ENCODE measurements at regions of chr3 and their contacts with region 1.

Region 1: DNA sequence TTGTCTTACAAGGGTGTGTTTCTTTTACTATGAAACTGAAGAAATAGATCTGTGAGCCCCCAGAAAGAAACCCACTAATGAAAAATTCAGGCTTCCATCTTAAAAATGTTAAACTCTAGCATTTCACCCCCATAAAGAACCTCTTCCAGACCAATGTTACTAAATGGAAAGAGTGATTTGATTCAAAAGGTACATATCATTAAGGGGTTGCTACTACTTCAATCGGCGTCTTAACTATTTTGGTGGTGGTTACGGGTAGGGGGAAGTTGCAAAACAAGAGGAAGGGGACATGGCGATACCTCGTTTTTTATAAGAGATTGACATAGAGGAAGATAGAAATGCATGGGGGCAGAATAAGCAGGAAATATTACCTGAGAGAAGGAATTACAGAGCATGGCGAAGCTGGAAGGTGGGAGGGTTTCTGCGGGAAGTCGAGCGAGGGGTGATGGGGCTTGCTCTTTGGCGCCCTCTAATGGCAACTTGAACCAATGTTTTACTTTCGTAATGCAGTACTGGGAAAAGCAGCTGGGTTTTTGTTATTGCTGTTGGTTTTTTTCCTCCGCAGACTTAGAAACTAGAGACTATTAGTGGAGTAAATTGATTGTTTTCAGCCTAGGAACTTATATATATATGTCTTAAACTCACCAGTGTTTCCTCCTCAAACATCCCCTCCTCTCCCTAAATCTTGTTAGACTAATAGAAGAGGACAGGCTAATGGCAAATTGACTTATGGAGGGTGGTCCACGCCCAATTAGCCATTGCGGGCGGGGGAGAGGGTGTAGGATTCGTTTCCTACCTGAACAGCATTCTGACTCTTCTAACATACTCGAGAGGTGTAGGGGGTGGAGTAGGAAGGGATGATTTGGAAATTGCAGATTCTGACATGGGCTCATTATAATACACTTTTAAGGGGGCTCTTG is 11.3 kb upstream of the SOX2 start:
- DNase-seq: peak; percentile 84 to 90 (median 86)
- H3K4me3 ChIP-seq: peak overlapping the region in 5 of 7 experiments; percentile 20 to 69 (median 51)
- H3K27ac ChIP-seq: no peak overlapping the region
- H3K4me1 ChIP-seq: peaks cover 0 to 25% (median 16%) of the 10 kb centered on the region in 4 experiments
- H3K27me3 ChIP-seq: peaks cover 39 to 99% (median 66%) of the 10 kb centered on the region in 5 experiments

Region 2: GRCh38 chr3:181581656-181582055 is 118.8 kb before region 1 on chr3:
- CTCF ChIA-PET with region 1: no interaction called
- POLR2A ChIA-PET with region 1: no interaction called
- DNase-seq: no peak
- H3K4me3 ChIP-seq: no peak overlapping the region
- H3K27ac ChIP-seq: no peak overlapping the region
- H3K4me1 ChIP-seq: no peaks in the 10 kb centered on the region
- H3K27me3 ChIP-seq: no peaks in the 10 kb centered on the region

Region 3: GRCh38 chr3:181610083-181610972 is 90.1 kb before region 1 on chr3:
- CTCF ChIA-PET with region 1: no interaction called
- POLR2A ChIA-PET with region 1: no interaction called
- DNase-seq: no peak
- H3K4me3 ChIP-seq: no peak overlapping the region
- H3K27ac ChIP-seq: no peak overlapping the region
- H3K4me1 ChIP-seq: peaks cover 0 to 6% (median 0%) of the 10 kb centered on the region in 4 experiments
- H3K27me3 ChIP-seq: no peaks in the 10 kb centered on the region

Region 4: DNA sequence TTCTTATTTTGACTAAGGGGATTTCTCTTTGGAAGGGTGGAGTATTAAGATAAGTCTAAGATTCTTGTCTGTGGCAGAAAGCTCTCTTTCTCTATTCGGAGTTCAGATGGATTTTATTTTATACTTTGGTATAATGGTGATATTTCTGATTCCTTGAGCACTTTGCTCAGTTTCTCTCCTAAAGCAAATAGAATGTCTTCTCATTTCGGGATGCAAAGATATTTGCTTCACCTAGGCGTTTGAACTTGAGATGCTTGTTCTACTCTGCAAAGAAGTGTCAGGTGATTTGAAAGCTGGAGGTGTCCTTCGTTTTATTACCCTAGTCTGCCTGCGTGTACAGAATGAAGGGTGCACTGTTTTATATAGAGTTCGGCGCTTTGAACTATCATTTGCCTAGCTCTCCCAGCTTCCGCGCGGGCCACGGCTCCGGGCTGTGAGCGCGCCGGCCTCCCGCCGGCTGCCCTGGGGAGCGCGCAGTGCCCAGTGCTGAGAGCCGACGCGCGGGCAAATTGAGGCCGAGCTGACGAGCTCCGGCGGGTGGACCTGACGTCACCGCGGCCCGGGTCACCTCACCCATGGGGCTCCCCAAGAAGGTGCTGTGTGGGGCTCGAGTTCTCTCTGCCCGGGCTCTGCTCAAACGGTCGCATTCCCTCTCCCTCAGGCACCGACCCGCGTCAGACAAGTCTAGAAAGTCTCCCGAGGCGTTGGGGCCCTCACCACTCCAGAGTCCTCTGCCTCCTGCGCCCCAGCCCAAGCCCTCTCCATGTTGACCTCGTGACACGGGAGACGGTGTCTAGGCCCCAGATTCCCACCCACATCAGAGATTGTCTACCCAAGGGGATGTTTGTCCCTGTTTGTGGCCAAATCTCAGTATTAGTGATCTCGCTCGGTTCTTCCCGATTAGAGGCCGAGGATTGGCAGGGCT is 18.8 kb after region 1 on chr3:
- CTCF ChIA-PET with region 1: interaction called, 27 read pairs
- POLR2A ChIA-PET with region 1: no interaction called
- DNase-seq: peak in 1 of 3 donors; percentile 17
- H3K4me3 ChIP-seq: no peak overlapping the region
- H3K27ac ChIP-seq: no peak overlapping the region
- H3K4me1 ChIP-seq: peaks cover 0 to 5% (median 0%) of the 10 kb centered on the region in 4 experiments
- H3K27me3 ChIP-seq: peaks cover 50 to 100% (median 88%) of the 10 kb centered on the region in 5 experiments

Region 5: DNA sequence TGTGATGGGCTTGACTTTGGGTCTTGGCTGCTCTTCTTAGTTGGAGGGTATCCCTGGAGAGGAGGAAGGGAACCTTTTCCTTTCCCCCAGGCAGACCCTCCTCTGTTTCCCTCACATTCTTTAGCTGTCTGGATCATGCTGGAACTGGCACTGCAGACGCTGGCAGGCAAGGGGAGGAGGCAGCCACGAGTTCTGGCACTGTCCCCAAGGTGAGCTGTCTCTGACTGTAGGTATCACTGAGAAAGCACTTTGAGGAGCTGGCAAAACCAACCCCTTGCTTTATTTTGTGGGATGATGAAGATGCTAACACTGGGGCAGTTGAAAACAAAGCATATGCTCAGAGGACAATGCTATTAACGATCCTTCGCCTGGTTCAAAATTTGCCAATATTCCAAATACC is 186.2 kb after region 1 on chr3:
- CTCF ChIA-PET with region 1: no interaction called
- POLR2A ChIA-PET with region 1: no interaction called
- DNase-seq: no peak
- H3K4me3 ChIP-seq: no peak overlapping the region
- H3K27ac ChIP-seq: no peak overlapping the region
- H3K4me1 ChIP-seq: no peaks in the 10 kb centered on the region
- H3K27me3 ChIP-seq: peaks cover 0 to 4% (median 0%) of the 10 kb centered on the region in 5 experiments

Region 6: GRCh38 chr3:182259579-182259978 is 559.2 kb after region 1 on chr3:
- CTCF ChIA-PET with region 1: no interaction called
- POLR2A ChIA-PET with region 1: no interaction called
- DNase-seq: no peak
- H3K4me3 ChIP-seq: no peak overlapping the region
- H3K27ac ChIP-seq: no peak overlapping the region
- H3K4me1 ChIP-seq: no peaks in the 10 kb centered on the region
- H3K27me3 ChIP-seq: peaks cover 4 to 55% (median 24%) of the 10 kb centered on the region in 5 experiments

Measured in common myeloid progenitor, CD34-positive (primary cell).